B cell (primary cell): ENCODE measurements at regions of chr3 and their contacts with region 1.

Region 1: DNA sequence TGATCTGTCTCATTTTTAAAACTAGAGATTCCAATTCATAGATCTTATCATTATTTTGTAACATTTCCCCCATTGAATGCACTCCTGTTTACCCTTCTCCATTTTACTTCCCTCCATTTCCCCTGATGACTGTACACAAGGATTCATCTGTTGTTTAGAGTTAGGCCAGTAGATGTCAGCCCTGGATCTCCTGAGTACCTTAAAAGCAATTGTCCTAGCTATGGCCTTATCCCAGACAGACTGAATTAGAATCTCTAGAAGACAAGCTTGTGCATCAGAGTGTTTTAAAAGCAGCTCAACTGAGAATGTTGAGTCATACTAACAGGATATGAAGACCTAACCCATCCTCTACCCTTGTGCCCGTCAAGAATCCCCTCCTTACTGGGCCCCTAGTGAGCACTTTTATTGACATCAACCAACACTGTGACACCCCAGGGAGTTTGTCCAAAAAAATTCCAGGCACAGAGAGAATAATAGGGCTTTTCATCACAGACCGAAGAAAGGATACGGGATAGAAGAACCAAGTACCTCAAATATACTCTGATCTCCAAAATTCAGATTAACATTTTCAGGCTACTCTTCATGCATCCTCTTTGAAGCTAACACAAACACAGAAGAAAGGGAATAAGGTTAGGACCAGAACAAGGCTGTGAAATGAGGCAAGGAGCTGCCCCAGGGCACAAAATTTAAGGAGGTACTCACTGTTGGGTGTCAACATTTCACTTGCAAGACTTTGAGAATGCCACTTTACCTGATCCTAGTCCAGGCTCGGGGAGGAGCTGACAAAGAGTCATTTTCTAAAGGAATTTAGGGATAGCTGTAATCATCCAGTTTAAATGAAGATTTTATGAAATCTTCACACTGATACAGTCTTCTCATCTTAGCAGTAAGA is 17.1 kb downstream of the ZBED2 start:
- DNase-seq: peak; percentile 47
- ATAC-seq: peak; percentile 86
- H3K4me3 ChIP-seq: no peak overlapping the region
- H3K4me3 Mint-ChIP-seq: no peak overlapping the region
- H3K27ac ChIP-seq: no peak overlapping the region
- H3K27ac Mint-ChIP-seq: peak overlapping the region; percentile 59
- H3K4me1 ChIP-seq: peaks cover 9 to 18% of the 10 kb centered on the region in 2 donors
- H3K4me1 Mint-ChIP-seq: peaks cover 31% of the 10 kb centered on the region
- H3K27me3 ChIP-seq: no peaks in the 10 kb centered on the region
- H3K27me3 Mint-ChIP-seq: no peaks in the 10 kb centered on the region
- CTCF ChIP-seq: peak; percentile 55

Region 2: GRCh38 chr3:111594205-111594604 is 16.2 kb after region 1 on chr3:
- CTCF ChIA-PET with region 1: interaction called, 35 read pairs
- POLR2A ChIA-PET with region 1: no interaction called
- intact Hi-C with region 1: loop called (anchors 2 kb)
- DNase-seq: peak; percentile 25
- ATAC-seq: peak; percentile 74
- H3K4me3 ChIP-seq: no peak overlapping the region
- H3K4me3 Mint-ChIP-seq: peak overlapping the region; percentile 56
- H3K27ac ChIP-seq: peak overlapping the region; percentile 16 to 71
- H3K27ac Mint-ChIP-seq: peak overlapping the region; percentile 84
- H3K4me1 ChIP-seq: peaks cover 27 to 47% of the 10 kb centered on the region in 2 donors
- H3K4me1 Mint-ChIP-seq: peaks cover 58% of the 10 kb centered on the region
- H3K27me3 ChIP-seq: no peaks in the 10 kb centered on the region
- H3K27me3 Mint-ChIP-seq: no peaks in the 10 kb centered on the region
- CTCF ChIP-seq: no peak

Region 3: GRCh38 chr3:111604119-111604518 is 26.1 kb after region 1 on chr3:
- CTCF ChIA-PET with region 1: interaction called, 11 read pairs
- POLR2A ChIA-PET with region 1: no interaction called
- intact Hi-C with region 1: no loop called
- DNase-seq: no peak
- ATAC-seq: peak; percentile 49
- H3K4me3 ChIP-seq: no peak overlapping the region
- H3K4me3 Mint-ChIP-seq: no peak overlapping the region
- H3K27ac ChIP-seq: peak overlapping the region in 1 of 2 donors; percentile 16
- H3K27ac Mint-ChIP-seq: peak overlapping the region; percentile 82
- H3K4me1 ChIP-seq: peaks cover 14 to 16% of the 10 kb centered on the region in 2 donors
- H3K4me1 Mint-ChIP-seq: peaks cover 38% of the 10 kb centered on the region
- H3K27me3 ChIP-seq: no peaks in the 10 kb centered on the region
- H3K27me3 Mint-ChIP-seq: no peaks in the 10 kb centered on the region
- CTCF ChIP-seq: no peak

Region 4: GRCh38 chr3:111691293-111691909 is 113.4 kb after region 1 on chr3:
- CTCF ChIA-PET with region 1: interaction called, 65 read pairs
- POLR2A ChIA-PET with region 1: no interaction called
- intact Hi-C with region 1: loop called (anchors 1 kb)
- DNase-seq: peak; percentile 56
- ATAC-seq: peak; percentile 49
- H3K4me3 ChIP-seq: no peak overlapping the region
- H3K4me3 Mint-ChIP-seq: no peak overlapping the region
- H3K27ac ChIP-seq: no peak overlapping the region
- H3K27ac Mint-ChIP-seq: no peak overlapping the region
- H3K4me1 ChIP-seq: peaks cover 2 to 19% of the 10 kb centered on the region in 2 donors
- H3K4me1 Mint-ChIP-seq: peaks cover 22% of the 10 kb centered on the region
- H3K27me3 ChIP-seq: no peaks in the 10 kb centered on the region
- H3K27me3 Mint-ChIP-seq: no peaks in the 10 kb centered on the region
- CTCF ChIP-seq: peak; percentile 62